T-cell (primary cell): ENCODE measurements at regions of chr3 and their contacts with region 1.

Region 1: GRCh38 chr3:172461530-172462138 is 13.4 kb upstream of the GHSR start:
- DNase-seq: peak in 1 of 35 experiments; percentile 54
- ATAC-seq: peak in 2 of 4 experiments; percentile 39 to 63
- H3K4me3 ChIP-seq: no peak overlapping the region
- H3K4me3 Mint-ChIP-seq: no peak overlapping the region
- H3K27ac ChIP-seq: no peak overlapping the region
- H3K27ac Mint-ChIP-seq: no peak overlapping the region
- H3K4me1 ChIP-seq: no peaks in the 10 kb centered on the region
- H3K4me1 Mint-ChIP-seq: no peaks in the 10 kb centered on the region
- H3K27me3 ChIP-seq: peaks cover 0 to 2% of the 10 kb centered on the region in 2 experiments
- H3K27me3 Mint-ChIP-seq: peaks cover 2% of the 10 kb centered on the region in 2 donors

Region 2: DNA sequence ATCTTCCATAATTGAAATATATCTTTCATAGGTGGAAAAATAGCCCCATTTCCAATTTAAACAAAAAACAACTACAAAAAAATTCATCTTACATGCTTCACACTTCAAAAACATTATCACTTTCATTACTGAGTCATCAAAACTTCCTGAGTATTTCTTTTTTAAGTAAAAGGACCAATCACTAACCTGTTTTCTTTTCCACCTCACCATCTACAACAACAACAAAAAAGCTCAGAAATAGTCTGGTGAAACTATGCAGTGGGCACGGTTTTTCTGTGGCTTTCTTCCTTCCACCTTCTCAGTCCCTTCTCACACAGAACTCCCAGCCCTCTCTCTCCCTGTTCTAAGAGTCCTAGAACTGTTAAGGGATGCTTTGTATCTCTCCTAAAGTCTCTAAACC is 981.1 kb before region 1 on chr3:
- CTCF ChIA-PET with region 1: no interaction called
- POLR2A ChIA-PET with region 1: no interaction called
- DNase-seq: peak in 2 of 35 experiments; percentile 5 to 47
- ATAC-seq: peak; percentile 74 to 90 (median 80)
- H3K4me3 ChIP-seq: no peak overlapping the region
- H3K4me3 Mint-ChIP-seq: peak overlapping the region; percentile 19 to 45 (median 22)
- H3K27ac ChIP-seq: peak overlapping the region; percentile 52
- H3K27ac Mint-ChIP-seq: peak overlapping the region; percentile 89 to 90
- H3K4me1 ChIP-seq: peaks cover 0 to 13% of the 10 kb centered on the region in 2 experiments
- H3K4me1 Mint-ChIP-seq: peaks cover 10 to 16% (median 15%) of the 10 kb centered on the region in 3 donors
- H3K27me3 ChIP-seq: no peaks in the 10 kb centered on the region
- H3K27me3 Mint-ChIP-seq: no peaks in the 10 kb centered on the region

Region 3: GRCh38 chr3:172476347-172476746 is 14.7 kb after region 1 on chr3:
- CTCF ChIA-PET with region 1: interaction called, 10 to 11 read pairs
- POLR2A ChIA-PET with region 1: no interaction called
- DNase-seq: no peak
- ATAC-seq: no peak
- H3K4me3 ChIP-seq: no peak overlapping the region
- H3K4me3 Mint-ChIP-seq: peak overlapping the region; percentile 78 to 97 (median 81)
- H3K27ac ChIP-seq: no peak overlapping the region
- H3K27ac Mint-ChIP-seq: peak overlapping the region in 1 of 2 donors; percentile 18
- H3K4me1 ChIP-seq: peaks cover 0 to 4% of the 10 kb centered on the region in 2 experiments
- H3K4me1 Mint-ChIP-seq: peaks cover 15 to 17% (median 16%) of the 10 kb centered on the region in 3 donors
- H3K27me3 ChIP-seq: no peaks in the 10 kb centered on the region
- H3K27me3 Mint-ChIP-seq: peaks cover 0 to 2% of the 10 kb centered on the region in 2 donors